ENCODE measurements at regions of chr9 and their contacts with region 1.

Region 1: DNA sequence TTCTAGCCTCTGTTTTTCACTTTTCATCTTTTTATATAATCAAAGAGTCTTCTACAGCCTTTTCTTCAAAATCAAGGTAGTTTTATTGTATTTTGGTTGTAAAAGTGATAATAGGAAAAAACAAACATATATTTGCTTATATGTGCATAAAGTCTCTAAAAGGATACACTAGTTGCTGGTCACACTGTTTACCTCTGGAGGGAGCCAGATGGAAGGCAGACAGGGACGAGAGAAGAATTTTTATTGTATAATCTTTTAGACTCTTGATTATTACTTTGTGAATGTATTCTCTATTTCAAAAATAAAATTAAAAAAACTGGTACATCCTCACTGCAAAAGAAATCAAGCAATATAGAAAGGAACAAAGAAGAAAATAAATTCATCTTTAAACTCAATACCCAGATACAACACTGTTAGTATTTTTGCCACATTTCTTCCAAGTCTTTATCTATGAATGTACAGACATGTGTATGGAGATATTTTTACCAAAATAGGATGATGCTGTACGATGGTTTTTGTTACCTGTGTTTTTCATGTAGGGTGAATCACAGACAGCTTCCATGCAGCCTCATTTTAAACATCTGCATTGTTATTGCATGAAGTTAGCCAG is 6.1 kb upstream of the RNF183 start:
- DNase-seq: peak; percentile 64
- H3K4me3 Mint-ChIP-seq: no peak overlapping the region
- H3K27ac Mint-ChIP-seq: no peak overlapping the region
- H3K4me1 Mint-ChIP-seq: no peaks in the 10 kb centered on the region
- H3K27me3 Mint-ChIP-seq: no peaks in the 10 kb centered on the region
- CTCF ChIP-seq: peak; percentile 58

Region 2: GRCh38 chr9:113331780-113332179 is 22.5 kb after region 1 on chr9:
- CTCF ChIA-PET with region 1: interaction called, 3 read pairs
- POLR2A ChIA-PET with region 1: no interaction called
- intact Hi-C with region 1: loop called (anchors 1 kb)
- DNase-seq: no peak
- H3K4me3 Mint-ChIP-seq: no peak overlapping the region
- H3K27ac Mint-ChIP-seq: no peak overlapping the region
- H3K4me1 Mint-ChIP-seq: no peaks in the 10 kb centered on the region
- H3K27me3 Mint-ChIP-seq: no peaks in the 10 kb centered on the region
- CTCF ChIP-seq: no peak

Region 3: GRCh38 chr9:113401027-113401792 is 91.9 kb after region 1 on chr9 and contains the start of gene ALAD:
- CTCF ChIA-PET with region 1: interaction called, 30 read pairs
- POLR2A ChIA-PET with region 1: interaction called, 4 read pairs
- intact Hi-C with region 1: loop called (anchors 1 kb)
- DNase-seq: peak; percentile 98
- H3K4me3 Mint-ChIP-seq: peak within 1 kb of the TSS; percentile 97
- H3K27ac Mint-ChIP-seq: peak within 1 kb of the TSS; percentile 82
- H3K4me1 Mint-ChIP-seq: peaks cover 12% of the 10 kb centered on the region
- H3K27me3 Mint-ChIP-seq: no peaks in the 10 kb centered on the region
- CTCF ChIP-seq: peak; percentile 86
- total RNA-seq, gene ALAD: 6.6 and 7.8 TPM in 2 replicates

Region 4: GRCh38 chr9:113410207-113410864 is 101.0 kb after region 1 on chr9 and contains the starts of genes C9orf43 and POLE3:
- CTCF ChIA-PET with region 1: interaction called, 30 read pairs
- POLR2A ChIA-PET with region 1: interaction called, 3 read pairs
- intact Hi-C with region 1: loop called (anchors 1 kb)
- DNase-seq: peak; percentile 96
- H3K4me3 Mint-ChIP-seq: peak within 1 kb of the TSS; percentile 77
- H3K27ac Mint-ChIP-seq: peak within 1 kb of the TSS; percentile 96
- H3K4me1 Mint-ChIP-seq: peaks cover 18% of the 10 kb centered on the region
- H3K27me3 Mint-ChIP-seq: no peaks in the 10 kb centered on the region
- CTCF ChIP-seq: no peak
- total RNA-seq, gene C9orf43: 0.84 and 1.1 TPM in 2 replicates
- total RNA-seq, gene POLE3: 51.8 and 54.0 TPM in 2 replicates

Region 5: GRCh38 chr9:113446323-113446740 is 137.0 kb after region 1 on chr9:
- CTCF ChIA-PET with region 1: interaction called, 3 read pairs
- POLR2A ChIA-PET with region 1: no interaction called
- intact Hi-C with region 1: loop called (anchors 2 kb)
- DNase-seq: peak; percentile 51
- H3K4me3 Mint-ChIP-seq: no peak overlapping the region
- H3K27ac Mint-ChIP-seq: no peak overlapping the region
- H3K4me1 Mint-ChIP-seq: no peaks in the 10 kb centered on the region
- H3K27me3 Mint-ChIP-seq: no peaks in the 10 kb centered on the region
- CTCF ChIP-seq: peak; percentile 66

Region 6: GRCh38 chr9:113577525-113578261 is 268.4 kb after region 1 on chr9:
- CTCF ChIA-PET with region 1: no interaction called
- POLR2A ChIA-PET with region 1: no interaction called
- intact Hi-C with region 1: no loop called
- DNase-seq: peak; percentile 35
- H3K4me3 Mint-ChIP-seq: no peak overlapping the region
- H3K27ac Mint-ChIP-seq: peak overlapping the region; percentile 92
- H3K4me1 Mint-ChIP-seq: peaks cover 60% of the 10 kb centered on the region
- H3K27me3 Mint-ChIP-seq: no peaks in the 10 kb centered on the region
- CTCF ChIP-seq: no peak

Region 7: GRCh38 chr9:113591001-113591898 is 281.9 kb after region 1 on chr9:
- CTCF ChIA-PET with region 1: no interaction called
- POLR2A ChIA-PET with region 1: no interaction called
- intact Hi-C with region 1: loop called (anchors 10 kb)
- DNase-seq: peak; percentile 72
- H3K4me3 Mint-ChIP-seq: no peak overlapping the region
- H3K27ac Mint-ChIP-seq: no peak overlapping the region
- H3K4me1 Mint-ChIP-seq: no peaks in the 10 kb centered on the region
- H3K27me3 Mint-ChIP-seq: no peaks in the 10 kb centered on the region
- CTCF ChIP-seq: peak; percentile 84